HEK293T (cell line): ENCODE measurements at regions of chrX and their contacts with region 1.

Region 1: DNA sequence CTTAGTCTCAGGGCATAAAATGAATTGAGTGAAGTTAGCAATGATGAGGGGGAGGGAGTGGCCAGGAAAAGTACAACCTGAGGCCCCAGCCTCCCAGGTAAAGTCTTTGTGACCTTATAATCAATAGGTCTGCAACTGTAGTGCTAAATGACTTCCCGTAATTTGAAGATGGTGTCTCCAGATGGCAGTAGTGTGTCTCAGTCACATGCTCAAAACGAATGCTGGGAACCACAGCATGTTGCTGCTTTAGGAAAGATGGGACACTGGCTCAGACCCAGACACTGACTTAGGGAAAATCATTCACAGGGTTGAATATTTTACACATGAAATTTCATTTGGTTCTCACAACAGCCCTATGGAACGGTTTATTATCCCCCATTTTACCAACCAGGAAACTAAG is 10.3 kb downstream of the SRPX2 start:
- DNase-seq: peak; percentile 46

Region 2: GRCh38 chrX:100600758-100601157 is 53.5 kb before region 1 on chrX:
- CTCF ChIA-PET with region 1: no interaction called
- POLR2A ChIA-PET with region 1: no interaction called
- DNase-seq: no peak

Region 3: GRCh38 chrX:100615005-100615404 is 39.3 kb before region 1 on chrX:
- CTCF ChIA-PET with region 1: no interaction called
- POLR2A ChIA-PET with region 1: no interaction called
- DNase-seq: peak; percentile 60

Region 4: GRCh38 chrX:100636321-100636991 is 17.8 kb before region 1 on chrX and contains the start of gene TSPAN6:
- CTCF ChIA-PET with region 1: interaction called, 11 read pairs
- POLR2A ChIA-PET with region 1: no interaction called
- DNase-seq: peak; percentile 94

Region 5: GRCh38 chrX:100798484-100799214 is 144.4 kb after region 1 on chrX:
- CTCF ChIA-PET with region 1: no interaction called
- POLR2A ChIA-PET with region 1: no interaction called
- DNase-seq: no peak